HepG2 (cell line): ENCODE measurements at regions of chr5 and their contacts with region 1.

Region 1: DNA sequence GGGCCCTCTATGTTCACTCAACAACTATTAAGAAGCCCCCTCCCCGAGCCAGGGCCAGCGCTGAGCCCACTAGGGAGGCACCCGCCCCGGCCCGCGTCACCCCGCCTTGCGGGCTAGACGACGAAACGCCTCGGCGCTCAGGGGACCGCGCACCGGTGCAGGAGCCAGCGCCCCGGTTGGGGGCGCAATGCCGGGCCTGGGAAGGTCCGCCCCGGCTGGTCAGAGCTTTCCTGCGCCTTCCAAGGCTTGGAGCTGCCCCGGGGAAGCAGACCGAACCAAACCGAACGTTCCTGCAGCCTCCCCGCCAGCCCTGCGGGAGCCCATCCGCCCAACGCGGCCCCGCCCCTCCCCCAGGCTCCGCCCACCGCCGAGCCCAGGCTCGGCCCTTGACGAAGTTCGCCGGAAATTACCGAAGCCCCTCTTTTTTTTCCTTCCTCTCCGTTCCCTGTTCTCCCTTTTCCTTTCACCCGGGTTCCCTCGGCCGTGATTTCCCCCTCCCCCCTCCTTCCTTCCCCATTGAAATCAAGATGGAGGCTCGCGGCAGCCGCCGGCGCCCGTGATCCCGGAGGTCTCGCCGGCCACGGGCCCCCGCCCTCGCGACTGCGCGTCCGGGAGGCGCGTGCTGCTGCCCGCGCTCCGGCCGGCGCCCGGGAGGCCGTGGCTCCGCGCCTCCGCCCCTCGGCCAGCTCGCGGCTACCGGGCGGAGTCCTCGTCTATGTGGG is at the start of gene TRIO:
- DNase-seq: peak; percentile 81
- ATAC-seq: peak; percentile 73
- H3K4me3 ChIP-seq: peak within 1 kb of the TSS; percentile 85 to 99 (median 93)
- H3K27ac ChIP-seq: peak within 1 kb of the TSS; percentile 70
- H3K4me1 ChIP-seq: peaks cover 28% of the 10 kb centered on the region
- H3K27me3 ChIP-seq: no peaks in the 10 kb centered on the region; a peak in 2 of 5 replicates
- CTCF ChIP-seq: peak; percentile 67
- EP300 ChIP-seq: no peak
- POLR2A ChIP-seq: peak in 1 of 2 experiments; percentile 78; a peak in 2 of 4 replicates
- RAD21 ChIP-seq: peak; percentile 77
- total RNA-seq, gene TRIO: 40.1 and 45.2 TPM in 2 replicates

Region 2: GRCh38 chr5:14184725-14185124 is 41.7 kb after region 1 on chr5:
- CTCF ChIA-PET with region 1: no interaction called
- POLR2A ChIA-PET with region 1: no interaction called
- in situ Hi-C with region 1: no loop called
- intact Hi-C with region 1: loop called (anchors 5 kb)
- DNase-seq: no peak
- ATAC-seq: no peak
- H3K4me3 ChIP-seq: no peak overlapping the region
- H3K27ac ChIP-seq: no peak overlapping the region
- H3K4me1 ChIP-seq: peaks cover 63% of the 10 kb centered on the region
- H3K27me3 ChIP-seq: no peaks in the 10 kb centered on the region
- CTCF ChIP-seq: no peak
- EP300 ChIP-seq: no peak
- POLR2A ChIP-seq: no peak
- RAD21 ChIP-seq: no peak

Region 3: DNA sequence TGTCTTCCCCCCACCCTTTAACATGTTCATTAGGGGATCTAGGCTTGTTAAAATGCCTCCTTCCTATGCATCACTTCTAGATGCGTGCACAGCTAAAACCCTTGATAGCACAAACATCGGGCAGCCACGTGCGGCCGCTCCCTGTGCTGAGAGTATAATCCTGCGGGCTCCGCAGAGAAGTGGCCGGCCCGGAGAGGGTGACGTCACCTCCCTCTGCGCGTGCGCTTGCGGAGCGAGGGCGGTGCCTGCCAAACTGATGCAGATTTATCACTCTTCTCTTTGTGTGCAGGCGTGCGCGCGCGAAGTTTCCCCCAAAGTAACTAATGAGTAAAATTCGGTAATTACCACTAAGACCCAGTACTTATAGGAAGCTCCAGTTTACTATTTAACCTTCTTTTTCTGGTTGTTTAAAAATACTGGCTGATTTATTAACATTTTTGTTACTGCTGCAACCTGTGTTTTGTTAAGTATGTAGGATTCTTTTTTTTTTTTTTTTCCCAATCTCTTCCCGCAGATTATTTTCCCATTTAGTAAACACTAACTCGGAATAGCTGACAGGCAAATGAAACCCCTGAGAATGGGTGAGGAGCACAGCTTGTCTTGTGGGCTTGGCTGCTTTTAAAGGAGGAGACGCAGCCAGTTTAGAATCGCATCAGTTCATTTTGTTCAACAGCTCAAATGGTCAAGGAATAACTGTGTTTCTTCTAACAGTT is 121.8 kb after region 1 on chr5:
- CTCF ChIA-PET with region 1: interaction called, 5 read pairs
- POLR2A ChIA-PET with region 1: interaction called, 3 read pairs
- in situ Hi-C with region 1: loop called (anchors 10 kb)
- intact Hi-C with region 1: loop called (anchors 1 kb)
- DNase-seq: peak; percentile 78
- ATAC-seq: peak; percentile 97
- H3K4me3 ChIP-seq: peak overlapping the region; percentile 26 to 34 (median 32); a peak in 5 of 6 replicates
- H3K27ac ChIP-seq: no peak overlapping the region
- H3K4me1 ChIP-seq: peaks cover 64% of the 10 kb centered on the region
- H3K27me3 ChIP-seq: no peaks in the 10 kb centered on the region
- CTCF ChIP-seq: no peak
- EP300 ChIP-seq: no peak
- POLR2A ChIP-seq: peak; percentile 48 to 64; a peak in 3 of 4 replicates
- RAD21 ChIP-seq: peak; percentile 35; the same call in 1 of the 2 replicates

Region 4: DNA sequence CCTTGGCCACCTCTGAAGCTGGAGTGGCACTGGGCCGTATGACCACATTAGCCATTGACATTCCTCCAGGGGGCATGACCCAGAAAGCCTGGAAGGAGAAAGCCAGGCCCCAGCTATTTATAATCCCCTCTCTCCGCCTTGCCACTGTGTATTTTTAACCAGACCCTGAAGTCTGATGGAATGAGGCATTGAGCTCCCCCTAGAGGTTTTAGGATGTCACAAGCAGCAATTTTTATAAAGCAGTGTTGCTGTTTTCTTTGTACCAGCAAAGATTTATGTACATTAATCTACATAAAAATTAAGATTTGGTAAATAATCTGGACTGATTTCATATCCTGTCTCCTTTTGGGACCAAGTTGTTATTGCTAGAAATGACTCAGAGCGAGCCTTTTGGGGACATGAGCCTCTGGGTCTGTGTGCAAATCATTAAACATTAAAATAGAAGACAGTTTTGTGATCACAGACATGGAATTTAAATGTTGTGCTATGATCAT is 127.3 kb after region 1 on chr5:
- CTCF ChIA-PET with region 1: interaction called, 5 read pairs
- POLR2A ChIA-PET with region 1: no interaction called
- in situ Hi-C with region 1: loop called (anchors 10 kb)
- intact Hi-C with region 1: loop called (anchors 1 kb)
- DNase-seq: peak; percentile 72
- ATAC-seq: peak; percentile 83
- H3K4me3 ChIP-seq: no peak overlapping the region
- H3K27ac ChIP-seq: no peak overlapping the region
- H3K4me1 ChIP-seq: peaks cover 61% of the 10 kb centered on the region
- H3K27me3 ChIP-seq: no peaks in the 10 kb centered on the region
- CTCF ChIP-seq: peak; percentile 76
- EP300 ChIP-seq: no peak
- POLR2A ChIP-seq: no peak
- RAD21 ChIP-seq: peak; percentile 55; the same call in 1 of the 2 replicates

Region 5: GRCh38 chr5:14664302-14665100 is 521.5 kb after region 1 on chr5 and contains the start of gene OTULIN:
- CTCF ChIA-PET with region 1: no interaction called
- POLR2A ChIA-PET with region 1: no interaction called
- in situ Hi-C with region 1: no loop called
- intact Hi-C with region 1: loop called (anchors 10 kb)
- DNase-seq: peak; percentile 79
- ATAC-seq: peak; percentile 86
- H3K4me3 ChIP-seq: peak within 1 kb of the TSS; percentile 83 to 91 (median 86)
- H3K27ac ChIP-seq: peak within 1 kb of the TSS; percentile 82
- H3K4me1 ChIP-seq: peaks cover 65% of the 10 kb centered on the region
- H3K27me3 ChIP-seq: no peaks in the 10 kb centered on the region
- CTCF ChIP-seq: no peak; the same call in 1 of the 2 replicates
- EP300 ChIP-seq: no peak
- POLR2A ChIP-seq: peak; percentile 74 to 96
- RAD21 ChIP-seq: no peak
- total RNA-seq, gene OTULIN: 31.9 and 34.8 TPM in 2 replicates

Region 6: DNA sequence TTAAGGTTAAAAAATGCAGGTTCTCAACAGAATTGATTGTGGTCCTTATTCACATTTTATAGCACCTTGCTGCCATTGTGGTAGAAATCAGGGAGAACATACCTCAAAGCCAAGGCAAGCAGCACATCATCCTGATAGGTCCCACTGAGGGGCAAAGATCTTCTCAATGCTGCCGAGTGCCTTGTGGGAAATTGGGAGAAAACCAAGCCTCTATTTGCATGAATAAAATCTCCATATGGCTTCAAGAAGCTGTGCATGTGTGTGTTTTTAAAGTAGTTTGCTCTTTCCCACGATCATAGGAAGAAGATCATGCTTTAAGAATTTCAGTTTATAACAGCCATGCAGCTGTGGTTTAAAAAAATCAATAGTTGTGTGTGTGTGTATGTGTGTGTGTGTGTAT is 1140.1 kb after region 1 on chr5:
- CTCF ChIA-PET with region 1: no interaction called
- POLR2A ChIA-PET with region 1: no interaction called
- in situ Hi-C with region 1: no loop called
- intact Hi-C with region 1: no loop called
- DNase-seq: no peak
- ATAC-seq: no peak
- H3K4me3 ChIP-seq: no peak overlapping the region
- H3K27ac ChIP-seq: no peak overlapping the region
- H3K4me1 ChIP-seq: no peaks in the 10 kb centered on the region
- H3K27me3 ChIP-seq: no peaks in the 10 kb centered on the region
- CTCF ChIP-seq: no peak
- EP300 ChIP-seq: no peak
- POLR2A ChIP-seq: no peak
- RAD21 ChIP-seq: no peak